ENCODE measurements at regions of chr10 and their contacts with region 1.

Region 1: DNA sequence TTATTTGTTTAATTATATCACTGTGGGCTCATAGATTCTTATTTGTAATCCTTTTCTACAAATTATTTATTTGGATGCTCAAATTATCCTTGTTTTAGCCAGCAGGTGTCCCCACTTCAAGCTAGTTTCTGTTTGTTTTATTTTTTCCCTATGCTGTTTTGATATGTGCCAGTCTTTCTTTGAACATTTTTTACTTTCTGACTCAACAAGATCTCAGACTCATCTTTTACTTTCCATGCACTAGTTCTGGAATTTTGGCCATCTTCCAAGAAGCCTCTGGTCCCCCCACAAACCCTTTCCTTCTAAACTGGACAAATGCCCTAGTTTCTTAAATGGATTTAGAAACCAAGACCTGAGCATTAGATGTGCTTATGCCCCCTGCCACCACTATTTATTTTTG is 11.5 kb upstream of the MRPS16 start:
- DNase-seq: peak in 3 of 4 experiments; percentile 17 to 39 (median 21)
- ATAC-seq: peak; percentile 55; the same call in 2 of the 3 replicates
- H3K4me3 ChIP-seq: no peak overlapping the region
- H3K27ac ChIP-seq: no peak overlapping the region
- H3K4me1 ChIP-seq: peaks cover 0 to 7% of the 10 kb centered on the region in 2 experiments; a peak in 2 of 5 replicates
- H3K27me3 ChIP-seq: no peaks in the 10 kb centered on the region
- CTCF ChIP-seq: peak; percentile 49 to 75 (median 64); a peak in 4 of 6 replicates
- EP300 ChIP-seq: no peak
- POLR2A ChIP-seq: no peak
- RAD21 ChIP-seq: peak; percentile 55 to 72

Region 2: GRCh38 chr10:73252445-73253224 is 11.3 kb before region 1 on chr10 and contains the start of gene MRPS16:
- CTCF ChIA-PET with region 1: no interaction called
- POLR2A ChIA-PET with region 1: interaction called, 26 read pairs
- in situ Hi-C with region 1: no loop called
- intact Hi-C with region 1: no loop called
- DNase-seq: peak; percentile 93 to 99 (median 95)
- ATAC-seq: peak; percentile 87
- H3K4me3 ChIP-seq: peak within 1 kb of the TSS; percentile 59
- H3K27ac ChIP-seq: peak within 1 kb of the TSS; percentile 89
- H3K4me1 ChIP-seq: peaks cover 7 to 28% of the 10 kb centered on the region in 2 experiments; a peak in 4 of 5 replicates
- H3K27me3 ChIP-seq: no peaks in the 10 kb centered on the region
- CTCF ChIP-seq: peak in 2 of 3 experiments; percentile 1 to 20; a peak in 2 of 6 replicates
- EP300 ChIP-seq: peak; percentile 52; the same call in 1 of the 2 replicates
- POLR2A ChIP-seq: peak; percentile 98
- RAD21 ChIP-seq: no peak
- polyA plus RNA-seq, gene MRPS16: 65.0 to 99.7 TPM

Region 3: GRCh38 chr10:73332221-73332778 is 68.4 kb after region 1 on chr10:
- CTCF ChIA-PET with region 1: no interaction called
- POLR2A ChIA-PET with region 1: no interaction called
- in situ Hi-C with region 1: no loop called
- intact Hi-C with region 1: no loop called
- DNase-seq: no peak
- ATAC-seq: no peak
- H3K4me3 ChIP-seq: no peak overlapping the region
- H3K27ac ChIP-seq: no peak overlapping the region
- H3K4me1 ChIP-seq: no peaks in the 10 kb centered on the region; a peak in 1 of 5 replicates
- H3K27me3 ChIP-seq: no peaks in the 10 kb centered on the region; a peak in 1 of 5 replicates
- CTCF ChIP-seq: no peak
- EP300 ChIP-seq: no peak
- POLR2A ChIP-seq: no peak
- RAD21 ChIP-seq: no peak

Region 4: DNA sequence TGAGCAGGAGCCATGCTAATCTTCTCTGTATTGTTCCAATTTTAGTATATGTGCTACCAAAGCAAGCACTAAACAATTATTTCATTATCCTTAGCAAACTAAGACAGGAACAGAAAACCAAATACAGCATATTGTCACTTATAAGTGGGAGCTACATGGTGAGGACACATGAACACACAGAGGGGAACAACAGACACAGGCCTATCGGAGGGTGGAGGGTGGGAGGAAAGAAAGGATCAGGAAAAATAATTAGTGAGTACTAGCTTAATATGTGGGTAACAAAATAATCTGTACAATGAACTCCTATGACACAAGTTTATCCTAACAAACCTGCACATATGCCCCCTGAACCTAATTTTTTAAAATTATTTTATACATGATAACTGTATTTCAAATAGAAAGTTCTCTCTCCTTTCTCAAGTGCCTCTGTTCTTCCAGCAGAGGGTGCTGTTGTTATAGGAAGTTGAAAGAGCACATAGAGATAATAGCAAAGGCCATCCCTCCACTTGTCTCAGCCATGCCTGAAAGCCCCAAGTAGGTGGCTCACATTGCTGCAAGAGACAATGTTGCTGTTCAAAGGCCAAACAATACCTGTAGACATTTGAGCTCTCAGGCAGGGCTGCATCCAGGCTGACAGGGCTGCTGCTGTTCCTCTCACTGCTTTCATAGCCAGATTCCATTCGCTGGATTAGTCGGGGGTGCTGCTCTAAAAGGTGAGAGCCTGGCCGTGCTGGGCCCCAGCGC is 265.3 kb after region 1 on chr10:
- CTCF ChIA-PET with region 1: no interaction called
- POLR2A ChIA-PET with region 1: no interaction called
- in situ Hi-C with region 1: no loop called
- intact Hi-C with region 1: loop called (anchors 1 kb)
- DNase-seq: peak; percentile 78 to 87 (median 82)
- ATAC-seq: peak; percentile 98
- H3K4me3 ChIP-seq: no peak overlapping the region
- H3K27ac ChIP-seq: no peak overlapping the region
- H3K4me1 ChIP-seq: peaks cover 0 to 2% of the 10 kb centered on the region in 2 experiments; a peak in 3 of 5 replicates
- H3K27me3 ChIP-seq: no peaks in the 10 kb centered on the region
- CTCF ChIP-seq: peak; percentile 82 to 98 (median 83)
- EP300 ChIP-seq: no peak; the same call in 1 of the 2 replicates
- POLR2A ChIP-seq: no peak
- RAD21 ChIP-seq: peak; percentile 100

Measured in K562 (cell line).